ENCODE measurements at regions of chr2 and their contacts with region 1.

Region 1: GRCh38 chr2:208254871-208255556 is at the start of gene IDH1:
- DNase-seq: peak; percentile 98 to 99 (median 98)
- ATAC-seq: peak; percentile 83 to 93 (median 86)
- H3K4me3 ChIP-seq: peak within 1 kb of the TSS; percentile 84 to 96 (median 95)
- H3K27ac ChIP-seq: peak within 1 kb of the TSS; percentile 68 to 73 (median 69)
- H3K4me1 ChIP-seq: peaks cover 0 to 32% (median 11%) of the 10 kb centered on the region in 4 donors
- H3K27me3 ChIP-seq: no peaks in the 10 kb centered on the region
- CTCF ChIP-seq: peak; percentile 58 to 76 (median 68)
- POLR2A ChIP-seq: peak; percentile 81
- total RNA-seq, gene IDH1: 147 to 682 (median 184) TPM

Region 2: DNA sequence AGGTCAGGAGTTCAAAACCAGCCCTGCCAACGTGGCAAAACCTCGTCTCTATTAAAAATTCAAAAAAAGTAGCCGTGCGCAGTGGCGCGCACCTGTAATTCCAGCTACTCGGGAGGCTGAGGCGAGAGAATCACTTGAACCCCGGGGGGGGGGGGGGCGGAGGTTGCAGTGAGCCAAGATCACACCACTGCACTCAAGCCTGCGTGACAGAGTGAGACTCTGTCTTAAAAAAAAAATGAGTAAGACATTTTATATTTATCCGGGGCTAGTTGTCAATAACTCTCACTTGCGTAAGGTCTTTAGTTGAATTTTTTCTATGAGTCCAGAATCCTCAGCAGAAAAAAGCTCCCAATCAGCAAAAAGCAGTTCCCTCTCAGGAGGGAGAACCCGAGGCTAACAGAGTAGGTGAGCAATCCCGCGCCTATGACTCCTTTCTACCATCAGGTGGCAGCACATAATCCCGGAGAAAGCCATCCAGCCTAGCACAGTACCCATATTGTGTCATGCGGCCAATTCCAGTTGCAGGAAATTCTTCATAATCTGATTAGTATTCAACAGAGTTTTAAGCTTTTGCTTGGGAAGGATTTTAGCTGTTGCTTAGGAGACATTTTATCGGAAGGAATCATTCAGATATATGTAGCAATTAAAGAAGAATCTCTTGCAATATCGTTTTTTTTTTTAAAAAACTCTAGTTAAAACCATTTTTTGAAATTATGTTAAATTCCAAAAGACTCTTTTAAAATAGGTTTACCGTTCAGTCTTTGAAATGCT is 79.8 kb before region 1 on chr2:
- intact Hi-C with region 1: loop called in 1 of 2 experiments (anchors 10 kb)
- DNase-seq: peak; percentile 67 to 84 (median 74)
- ATAC-seq: peak; percentile 99 to 100 (median 100)
- H3K4me3 ChIP-seq: no peak overlapping the region
- H3K27ac ChIP-seq: no peak overlapping the region
- H3K4me1 ChIP-seq: peaks cover 0 to 10% (median 0%) of the 10 kb centered on the region in 4 donors
- H3K27me3 ChIP-seq: no peaks in the 10 kb centered on the region
- CTCF ChIP-seq: peak; percentile 91 to 94 (median 93)
- POLR2A ChIP-seq: no peak